Heart left ventricle (tissue), 16 donors: ENCODE measurements at regions of chr4 and their contacts with region 1.

Region 1: GRCh38 chr4:168923526-168924194 is 86.4 kb downstream of the CBR4 start:
- DNase-seq: peak in 3 of 5 donors; percentile 36 to 56 (median 49)
- ATAC-seq: peak in 3 of 4 donors; percentile 25 to 47 (median 26)
- H3K4me3 ChIP-seq: no peak overlapping the region
- H3K27ac ChIP-seq: no peak overlapping the region
- H3K4me1 ChIP-seq: peaks cover 0 to 17% (median 0%) of the 10 kb centered on the region in 12 donors
- H3K27me3 ChIP-seq: no peaks in the 10 kb centered on the region
- CTCF ChIP-seq: peak; percentile 64 to 89 (median 72)
- POLR2A ChIP-seq: no peak

Region 2: DNA sequence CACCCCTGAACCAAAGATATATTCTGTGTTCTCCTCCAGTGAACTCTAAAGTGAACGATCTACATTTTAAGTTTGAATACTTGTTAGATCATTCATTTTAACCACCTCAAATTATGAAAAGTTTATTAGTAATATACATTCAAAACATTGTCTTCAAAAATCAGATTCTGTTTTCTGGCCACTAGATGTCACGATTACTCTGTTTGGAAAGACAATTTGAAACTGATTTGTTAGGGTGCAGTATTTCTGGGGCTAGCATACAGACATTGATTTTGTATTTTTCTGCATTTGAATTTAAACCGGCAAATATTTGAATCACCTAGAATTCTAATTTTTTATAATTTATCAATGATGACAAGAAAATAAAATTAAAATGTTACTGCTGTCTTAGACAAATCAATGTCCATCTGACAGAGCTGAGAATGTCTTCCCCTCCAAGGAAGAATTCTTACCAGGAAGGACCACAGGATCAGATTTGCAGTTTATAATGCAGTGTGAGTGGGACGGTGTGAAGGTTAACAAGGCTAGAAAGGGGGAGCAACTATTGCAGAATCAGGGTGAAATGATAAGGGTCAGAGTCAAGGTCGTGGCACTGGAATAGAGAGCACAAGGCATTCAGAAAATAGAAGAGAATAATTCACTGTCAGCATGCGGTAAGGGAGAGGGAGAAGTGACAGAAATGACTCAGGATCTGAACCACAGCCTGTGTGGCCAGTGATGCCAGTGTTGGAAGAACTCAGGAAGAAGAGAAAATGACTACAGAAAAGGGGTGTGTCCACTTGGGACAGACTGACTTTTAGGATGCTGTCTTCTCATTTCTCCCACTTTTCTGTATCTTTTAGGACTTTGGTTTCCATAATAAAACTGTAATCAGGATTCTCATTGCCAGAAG is 739.7 kb before region 1 on chr4:
- intact Hi-C with region 1: loop called in 1 of 10 experiments (anchors 10 kb)
- DNase-seq: no peak
- ATAC-seq: peak; percentile 32 to 52 (median 42)
- H3K4me3 ChIP-seq: no peak overlapping the region
- H3K27ac ChIP-seq: peak overlapping the region in 4 of 12 donors; percentile 21 to 58 (median 33)
- H3K4me1 ChIP-seq: peaks cover 0 to 5% (median 0%) of the 10 kb centered on the region in 12 donors
- H3K27me3 ChIP-seq: no peaks in the 10 kb centered on the region
- CTCF ChIP-seq: peak; percentile 36 to 67 (median 48)
- POLR2A ChIP-seq: no peak

Region 3: GRCh38 chr4:168585168-168586091 is 338.2 kb before region 1 on chr4:
- intact Hi-C with region 1: loop called (anchors 2 to 10 kb)
- DNase-seq: peak; percentile 80 to 88 (median 83)
- ATAC-seq: peak; percentile 85 to 92 (median 87)
- H3K4me3 ChIP-seq: no peak overlapping the region
- H3K27ac ChIP-seq: peak overlapping the region in 5 of 12 donors; percentile 16 to 64 (median 52)
- H3K4me1 ChIP-seq: peaks cover 0 to 49% (median 37%) of the 10 kb centered on the region in 12 donors
- H3K27me3 ChIP-seq: no peaks in the 10 kb centered on the region
- CTCF ChIP-seq: peak; percentile 57 to 83 (median 78)
- POLR2A ChIP-seq: no peak

Region 4: GRCh38 chr4:168731006-168731636 is 192.5 kb before region 1 on chr4:
- intact Hi-C with region 1: no loop called
- DNase-seq: no peak
- ATAC-seq: no peak
- H3K4me3 ChIP-seq: no peak overlapping the region
- H3K27ac ChIP-seq: peak overlapping the region in 1 of 12 donors; percentile 26
- H3K4me1 ChIP-seq: peaks cover 0 to 46% (median 11%) of the 10 kb centered on the region in 12 donors
- H3K27me3 ChIP-seq: no peaks in the 10 kb centered on the region
- CTCF ChIP-seq: no peak
- POLR2A ChIP-seq: no peak

Region 5: GRCh38 chr4:169010125-169011023 is 86.7 kb after region 1 on chr4 and contains the start of gene CBR4:
- intact Hi-C with region 1: loop called in 6 of 10 experiments (anchors 5 to 10 kb)
- DNase-seq: peak; percentile 97 to 99 (median 99)
- ATAC-seq: peak; percentile 99
- H3K4me3 ChIP-seq: peak within 1 kb of the TSS; percentile 49 to 89 (median 74)
- H3K27ac ChIP-seq: peak within 1 kb of the TSS; percentile 76 to 98 (median 94)
- H3K4me1 ChIP-seq: peaks cover 0 to 45% (median 27%) of the 10 kb centered on the region in 12 donors
- H3K27me3 ChIP-seq: no peaks in the 10 kb centered on the region
- CTCF ChIP-seq: peak in 9 of 12 donors; percentile 24 to 49 (median 39)
- POLR2A ChIP-seq: peak in 1 of 2 donors; percentile 95
- total RNA-seq, gene CBR4: 17.2 to 26.5 (median 24.2) TPM

Region 6: DNA sequence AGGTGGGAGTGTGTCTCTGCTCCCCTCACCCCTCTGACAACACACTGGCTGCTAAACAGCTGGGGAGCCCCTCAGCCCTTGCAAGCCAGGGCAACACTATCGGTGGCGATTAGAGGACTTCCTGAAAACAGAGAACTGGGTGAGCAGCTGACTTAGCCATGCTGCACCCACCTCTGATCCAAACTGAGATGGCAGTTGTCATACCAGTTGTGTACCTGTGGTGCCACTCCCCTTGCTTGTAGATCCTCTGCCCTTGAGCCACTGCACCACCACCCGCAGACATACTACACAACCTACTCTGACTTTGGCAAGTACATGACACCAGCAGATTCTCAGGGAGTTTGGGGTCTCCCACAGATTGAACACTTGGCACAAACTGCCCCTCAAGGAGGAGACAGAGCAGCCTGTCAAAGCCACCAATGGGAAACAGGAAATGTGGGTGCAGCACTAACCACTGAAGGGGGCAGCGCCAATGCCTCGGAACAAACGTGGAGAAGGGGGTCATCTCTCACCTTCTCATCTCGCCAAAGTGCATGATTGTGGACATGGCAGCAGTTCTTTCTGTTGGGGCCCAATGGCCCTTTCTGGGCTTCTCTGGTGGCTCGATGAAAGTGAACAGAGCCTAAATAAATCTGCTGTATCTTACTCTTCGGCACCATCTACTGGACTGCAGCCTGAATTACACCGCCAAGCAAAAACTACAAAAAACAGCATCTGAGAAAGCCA is 568.9 kb after region 1 on chr4:
- intact Hi-C with region 1: loop called in 9 of 10 experiments (anchors 2 to 10 kb)
- DNase-seq: no peak
- ATAC-seq: peak in 2 of 4 donors; percentile 16 to 74
- H3K4me3 ChIP-seq: no peak overlapping the region
- H3K27ac ChIP-seq: no peak overlapping the region
- H3K4me1 ChIP-seq: no peaks in the 10 kb centered on the region
- H3K27me3 ChIP-seq: no peaks in the 10 kb centered on the region
- CTCF ChIP-seq: peak; percentile 41 to 66 (median 58)
- POLR2A ChIP-seq: no peak

Region 7: GRCh38 chr4:169675825-169676224 is 752.2 kb after region 1 on chr4:
- intact Hi-C with region 1: no loop called
- DNase-seq: no peak
- ATAC-seq: no peak
- H3K4me3 ChIP-seq: no peak overlapping the region
- H3K27ac ChIP-seq: no peak overlapping the region
- H3K4me1 ChIP-seq: peaks cover 0 to 13% (median 0%) of the 10 kb centered on the region in 12 donors
- H3K27me3 ChIP-seq: no peaks in the 10 kb centered on the region
- CTCF ChIP-seq: no peak
- POLR2A ChIP-seq: no peak